Activated T-helper 1 cell treated with anti-CD3 and anti-CD28 coated beads, Interleukin-12 subunit alpha, Interleukin-12 subunit beta, Interleukin-2, Interleukin-4 antibody, amounts not matched to agents 30 ng/mL and 10 ng/mL and 1 ng/mL, durations not matched to agents 14 hours and 24 hours and 36 hours (primary cell): ENCODE measurements at regions of chr7 and their contacts with region 1.

Region 1: DNA sequence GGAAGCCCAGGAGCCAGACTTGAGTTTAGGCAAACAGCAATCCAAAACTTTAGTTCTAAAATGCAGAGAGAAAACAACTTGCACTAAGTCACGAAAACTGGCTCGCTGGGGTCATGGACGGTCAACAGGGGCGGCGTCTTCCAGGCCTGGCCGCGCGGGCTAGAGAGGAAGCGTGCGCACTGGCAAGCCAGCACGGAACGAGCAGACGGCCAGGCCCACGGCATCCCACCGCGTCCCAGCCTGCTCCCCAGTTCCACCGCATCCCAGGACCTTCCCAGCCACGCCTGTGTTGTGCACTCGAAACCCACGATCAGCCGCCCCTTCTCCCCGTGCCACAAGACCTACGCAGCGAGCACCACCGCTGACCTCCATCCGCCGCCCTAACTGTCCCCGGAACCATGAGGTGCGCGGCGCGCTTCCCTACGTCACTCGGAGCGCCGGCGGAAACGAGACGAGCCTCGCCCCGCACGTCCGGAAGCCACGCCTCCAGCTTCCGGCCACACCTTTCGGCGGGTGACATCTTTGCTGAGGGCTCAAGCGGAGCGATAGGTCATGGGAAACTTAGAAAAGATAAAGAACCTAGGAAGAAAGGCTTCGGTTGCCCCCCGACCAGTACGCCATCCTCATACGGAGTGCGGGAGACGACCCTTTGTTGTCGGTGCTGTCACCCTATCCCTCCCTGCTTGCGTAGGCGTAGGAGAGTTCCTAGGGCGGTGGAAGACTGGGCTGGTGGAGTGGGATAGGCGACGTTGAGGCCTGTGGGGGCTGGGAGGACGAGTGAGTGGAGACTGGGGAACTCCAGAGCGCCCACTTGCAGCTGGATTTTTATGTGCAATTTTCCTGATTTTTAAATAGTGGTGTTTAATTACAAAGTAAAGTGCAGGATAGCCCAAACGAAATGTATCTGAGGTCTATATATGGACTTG is at the start of gene TBRG4:
- DNase-seq: peak; percentile 94
- H3K4me3 Mint-ChIP-seq: peak within 1 kb of the TSS; percentile 96
- H3K27ac Mint-ChIP-seq: peak within 1 kb of the TSS; percentile 97
- H3K4me1 Mint-ChIP-seq: peaks cover 39% of the 10 kb centered on the region
- H3K27me3 Mint-ChIP-seq: peaks cover 12% of the 10 kb centered on the region
- total RNA-seq, gene TBRG4: 176 and 195 TPM in 2 replicates

Region 2: DNA sequence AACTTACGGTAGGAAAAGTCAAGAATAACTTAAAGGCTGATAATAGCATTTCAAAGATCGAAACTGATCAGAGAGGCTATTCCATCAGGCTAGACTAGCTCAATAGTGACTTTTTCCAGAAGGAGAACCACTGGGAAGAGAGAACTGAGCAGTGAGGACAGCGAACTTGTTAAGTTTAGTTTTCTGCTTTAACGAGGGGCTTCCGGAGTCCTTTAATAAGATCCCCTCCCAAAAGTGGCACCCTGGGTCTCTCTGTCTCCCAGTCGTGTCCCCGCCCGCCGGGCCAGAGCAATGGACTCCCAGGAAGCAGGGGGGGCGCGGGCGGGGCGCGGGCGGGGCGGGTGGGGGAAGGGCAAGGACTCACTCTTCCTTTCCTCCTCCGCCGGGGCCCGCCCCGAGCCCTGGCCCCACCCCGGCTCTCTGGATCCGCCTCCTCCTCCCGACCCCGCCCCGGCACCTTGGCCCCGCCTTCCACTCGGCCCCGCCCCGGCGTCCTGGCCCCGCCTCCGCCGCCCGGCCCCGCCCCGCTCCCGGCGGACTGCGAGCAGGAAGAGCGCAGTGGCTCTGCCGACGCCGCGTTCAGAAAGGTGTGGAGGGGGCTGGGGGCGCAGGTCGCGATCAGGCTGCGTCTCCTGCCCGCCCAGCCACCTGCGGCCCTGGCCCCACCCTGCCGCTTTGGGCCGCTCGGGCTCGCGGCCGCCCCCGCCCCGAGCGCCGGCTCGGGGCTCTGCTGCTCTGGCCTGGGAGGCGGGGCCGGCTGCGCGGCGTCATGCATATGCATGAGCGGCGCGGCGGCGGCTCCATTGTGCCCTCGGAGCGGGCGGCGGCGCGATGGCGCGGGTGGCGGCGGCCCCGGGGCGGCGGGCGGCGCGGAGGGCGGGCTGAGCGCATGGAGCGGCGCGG is 363.3 kb before region 1 on chr7 and contains the start of gene ZMIZ2:
- intact Hi-C with region 1: loop called (anchors 5 kb)
- DNase-seq: peak; percentile 88
- H3K4me3 Mint-ChIP-seq: peak within 1 kb of the TSS; percentile 92
- H3K27ac Mint-ChIP-seq: peak within 1 kb of the TSS; percentile 95
- H3K4me1 Mint-ChIP-seq: peaks cover 45% of the 10 kb centered on the region
- H3K27me3 Mint-ChIP-seq: no peaks in the 10 kb centered on the region
- total RNA-seq, gene ZMIZ2: 123 and 129 TPM in 2 replicates

Region 3: GRCh38 chr7:44980393-44981034 is 131.0 kb before region 1 on chr7:
- intact Hi-C with region 1: loop called (anchors 1 kb)
- DNase-seq: peak; percentile 56
- H3K4me3 Mint-ChIP-seq: peak overlapping the region; percentile 98
- H3K27ac Mint-ChIP-seq: peak overlapping the region; percentile 98
- H3K4me1 Mint-ChIP-seq: peaks cover 78% of the 10 kb centered on the region
- H3K27me3 Mint-ChIP-seq: no peaks in the 10 kb centered on the region

Region 4: DNA sequence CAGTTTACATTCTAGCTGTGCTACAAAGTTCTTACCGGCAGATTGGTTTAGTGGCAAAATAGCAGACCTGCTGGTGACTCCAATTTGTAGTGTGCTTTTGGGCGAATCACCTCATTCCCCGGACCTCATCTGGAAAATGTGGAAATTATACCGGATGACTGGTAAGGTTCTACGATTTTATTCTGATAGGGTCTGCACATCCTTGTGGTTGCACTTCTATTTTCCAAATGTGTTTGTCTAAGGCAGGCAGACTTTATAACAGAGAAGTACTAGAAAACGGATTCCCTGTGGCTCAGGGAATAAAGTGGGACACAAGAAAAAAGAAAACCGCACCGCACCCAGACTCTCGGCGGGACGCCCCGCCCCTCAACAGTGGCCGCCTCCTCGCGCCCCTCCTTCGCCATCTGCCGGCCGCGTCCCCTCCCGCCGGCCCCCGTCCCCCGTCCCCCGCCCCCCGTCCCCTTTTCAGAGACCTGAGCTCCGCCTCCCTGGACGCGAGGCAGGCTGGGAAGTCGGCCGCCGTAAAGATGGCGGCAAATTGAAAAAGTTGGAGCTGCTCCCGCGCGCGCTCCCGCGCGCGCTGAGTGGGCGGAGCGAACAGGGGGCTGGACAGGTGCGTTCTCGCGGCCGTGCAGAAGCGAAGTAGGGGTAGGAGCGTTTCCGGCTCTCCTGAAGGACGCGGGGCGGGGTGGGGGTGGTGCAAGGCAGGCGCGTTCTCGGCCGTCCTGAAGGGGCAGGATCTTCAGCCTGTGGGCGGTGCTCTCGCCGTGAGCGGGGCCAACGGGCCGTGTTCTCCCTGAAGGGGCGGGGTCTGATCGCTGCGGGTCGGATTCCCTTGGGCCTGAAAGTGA is 112.1 kb before region 1 on chr7:
- intact Hi-C with region 1: loop called (anchors 1 kb)
- DNase-seq: peak; percentile 99
- H3K4me3 Mint-ChIP-seq: peak overlapping the region; percentile 88
- H3K27ac Mint-ChIP-seq: peak overlapping the region; percentile 91
- H3K4me1 Mint-ChIP-seq: peaks cover 58% of the 10 kb centered on the region
- H3K27me3 Mint-ChIP-seq: no peaks in the 10 kb centered on the region

Region 5: GRCh38 chr7:45089341-45089891 is 22.1 kb before region 1 on chr7:
- intact Hi-C with region 1: loop called (anchors 1 kb)
- DNase-seq: peak; percentile 60
- H3K4me3 Mint-ChIP-seq: peak overlapping the region; percentile 73
- H3K27ac Mint-ChIP-seq: no peak overlapping the region
- H3K4me1 Mint-ChIP-seq: no peaks in the 10 kb centered on the region
- H3K27me3 Mint-ChIP-seq: peaks cover 36% of the 10 kb centered on the region

Region 6: GRCh38 chr7:45196374-45196773 is 84.8 kb after region 1 on chr7:
- intact Hi-C with region 1: loop called (anchors 1 kb)
- DNase-seq: peak; percentile 14
- H3K4me3 Mint-ChIP-seq: no peak overlapping the region
- H3K27ac Mint-ChIP-seq: peak overlapping the region; percentile 83
- H3K4me1 Mint-ChIP-seq: peaks cover 67% of the 10 kb centered on the region
- H3K27me3 Mint-ChIP-seq: peaks cover 4% of the 10 kb centered on the region